ENCODE measurements at regions of chr3 and their contacts with region 1.

Region 1: DNA sequence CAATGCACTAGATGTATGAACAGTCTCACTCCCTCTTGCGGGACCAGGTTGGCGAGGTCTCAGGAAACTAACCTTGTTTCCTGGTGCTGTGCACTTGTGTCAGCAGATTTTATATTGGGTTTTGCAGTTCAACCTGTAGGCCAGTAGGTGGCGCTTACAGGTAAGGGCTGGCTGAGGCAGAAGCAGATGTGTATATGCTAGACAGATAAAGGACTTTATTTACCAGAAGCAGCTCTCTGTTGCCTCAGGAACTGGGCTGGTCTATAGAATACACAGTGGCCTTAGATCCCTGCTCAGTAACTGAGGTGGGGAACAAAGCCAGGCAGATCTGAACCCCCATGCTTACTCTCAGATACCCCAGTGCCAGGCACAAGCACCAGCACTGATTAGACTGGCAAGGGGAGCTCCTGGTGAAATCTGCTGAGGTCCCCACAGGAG is 296.8 kb downstream of the DOCK3 start:
- DNase-seq: peak; percentile 67
- H3K4me3 Mint-ChIP-seq: no peak overlapping the region
- H3K27ac Mint-ChIP-seq: no peak overlapping the region
- H3K4me1 Mint-ChIP-seq: peaks cover 18% of the 10 kb centered on the region
- H3K27me3 Mint-ChIP-seq: no peaks in the 10 kb centered on the region

Region 2: GRCh38 chr3:50926868-50927267 is 44.6 kb before region 1 on chr3:
- CTCF ChIA-PET with region 1: no interaction called
- POLR2A ChIA-PET with region 1: no interaction called
- DNase-seq: no peak
- H3K4me3 Mint-ChIP-seq: no peak overlapping the region
- H3K27ac Mint-ChIP-seq: no peak overlapping the region
- H3K4me1 Mint-ChIP-seq: no peaks in the 10 kb centered on the region
- H3K27me3 Mint-ChIP-seq: no peaks in the 10 kb centered on the region

Region 3: GRCh38 chr3:51044982-51045381 is 73.5 kb after region 1 on chr3:
- CTCF ChIA-PET with region 1: no interaction called
- POLR2A ChIA-PET with region 1: no interaction called
- DNase-seq: no peak
- H3K4me3 Mint-ChIP-seq: no peak overlapping the region
- H3K27ac Mint-ChIP-seq: no peak overlapping the region
- H3K4me1 Mint-ChIP-seq: no peaks in the 10 kb centered on the region
- H3K27me3 Mint-ChIP-seq: no peaks in the 10 kb centered on the region

Region 4: GRCh38 chr3:51311055-51311454 is 339.5 kb after region 1 on chr3:
- CTCF ChIA-PET with region 1: interaction called, 13 read pairs
- POLR2A ChIA-PET with region 1: no interaction called
- DNase-seq: no peak
- H3K4me3 Mint-ChIP-seq: no peak overlapping the region
- H3K27ac Mint-ChIP-seq: no peak overlapping the region
- H3K4me1 Mint-ChIP-seq: no peaks in the 10 kb centered on the region
- H3K27me3 Mint-ChIP-seq: no peaks in the 10 kb centered on the region

Region 5: DNA sequence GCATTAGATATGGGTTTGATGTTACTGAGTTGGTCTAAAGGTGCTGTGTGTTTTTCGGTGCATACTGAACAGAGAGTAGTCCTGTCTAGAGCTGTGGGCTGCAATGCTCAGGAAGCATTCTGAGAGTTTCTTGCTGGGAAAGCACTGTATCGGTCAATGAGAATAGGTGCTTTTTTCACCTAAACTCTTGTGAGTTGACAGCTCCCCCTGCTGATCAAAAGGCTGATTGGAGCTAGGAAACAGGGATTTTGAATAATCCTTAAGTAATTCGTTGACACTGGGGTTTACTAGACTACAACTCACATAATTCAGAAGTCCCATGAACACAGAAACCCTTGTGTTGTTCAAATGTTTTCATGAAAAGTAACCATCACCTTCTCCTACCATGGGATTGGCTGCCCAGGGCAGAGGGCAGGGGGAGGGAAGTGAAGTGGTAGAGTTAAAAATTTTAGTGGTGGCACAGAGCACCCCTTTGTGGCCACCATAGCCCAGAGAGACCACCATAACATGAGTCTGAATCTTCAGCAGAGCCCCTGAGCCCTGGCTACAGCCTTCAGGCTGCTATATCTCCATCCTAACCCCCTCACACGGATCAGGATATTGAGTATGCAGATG is 400.5 kb after region 1 on chr3:
- CTCF ChIA-PET with region 1: interaction called, 15 read pairs
- POLR2A ChIA-PET with region 1: no interaction called
- DNase-seq: peak; percentile 61
- H3K4me3 Mint-ChIP-seq: no peak overlapping the region
- H3K27ac Mint-ChIP-seq: no peak overlapping the region
- H3K4me1 Mint-ChIP-seq: no peaks in the 10 kb centered on the region
- H3K27me3 Mint-ChIP-seq: peaks cover 3% of the 10 kb centered on the region

Measured in activated CD4-positive, alpha-beta memory T cell treated with anti-CD3 and anti-CD28 coated beads, Interleukin-2, amount 10 ng/mL, durations not matched to agents 7 days and 5 days (primary cell).